SK-N-SH (cell line): ENCODE measurements at regions of chr17 and their contacts with region 1.

Region 1: GRCh38 chr17:48259694-48260291 is 152.2 kb downstream of the SNX11 start:
- DNase-seq: no peak
- H3K4me3 ChIP-seq: no peak overlapping the region; a peak in 1 of 4 replicates
- H3K27ac ChIP-seq: no peak overlapping the region
- H3K4me1 ChIP-seq: no peaks in the 10 kb centered on the region
- H3K27me3 ChIP-seq: peaks cover 66% of the 10 kb centered on the region
- CTCF ChIP-seq: peak; percentile 56
- EP300 ChIP-seq: no peak
- RAD21 ChIP-seq: peak; percentile 37

Region 2: GRCh38 chr17:48131216-48131824 is 128.5 kb before region 1 on chr17:
- CTCF ChIA-PET with region 1: no interaction called
- POLR2A ChIA-PET with region 1: no interaction called
- DNase-seq: peak; percentile 82
- H3K4me3 ChIP-seq: no peak overlapping the region; a peak in 1 of 4 replicates
- H3K27ac ChIP-seq: no peak overlapping the region
- H3K4me1 ChIP-seq: peaks cover 7 to 17% of the 10 kb centered on the region in 2 experiments; a peak in 2 of 4 replicates
- H3K27me3 ChIP-seq: peaks cover 8% of the 10 kb centered on the region; the same call in 1 of the 2 replicates
- CTCF ChIP-seq: peak; percentile 99
- EP300 ChIP-seq: no peak
- RAD21 ChIP-seq: peak; percentile 99

Region 3: DNA sequence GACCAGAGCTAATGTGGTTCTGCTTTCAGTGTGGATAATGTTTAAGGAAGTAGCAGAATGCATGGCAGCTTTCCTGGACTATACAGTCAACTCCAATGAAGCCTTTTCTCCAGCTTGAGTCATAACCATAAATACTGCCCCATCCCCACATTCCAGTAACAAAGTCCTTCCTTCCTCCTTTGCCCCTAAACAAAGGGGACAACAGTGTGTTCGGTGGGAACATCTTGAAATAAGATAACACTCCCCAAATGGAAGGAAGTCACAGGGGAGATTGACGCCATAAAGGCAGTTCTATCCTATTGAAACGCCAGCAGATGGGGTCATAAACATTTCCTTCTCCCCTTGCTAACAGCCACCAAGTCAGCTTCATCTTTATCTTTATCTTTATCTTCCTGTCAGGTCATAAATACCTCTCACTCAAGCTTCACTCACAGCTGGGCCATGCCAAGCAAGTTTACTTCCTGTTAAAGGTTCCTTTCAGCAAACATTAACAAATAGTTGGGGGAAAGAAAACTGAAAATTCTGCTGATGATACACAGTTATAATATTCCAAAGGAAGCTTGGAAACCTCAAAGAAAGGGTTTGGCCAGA is 15.6 kb before region 1 on chr17:
- CTCF ChIA-PET with region 1: interaction called, 31 read pairs
- POLR2A ChIA-PET with region 1: no interaction called
- DNase-seq: no peak
- H3K4me3 ChIP-seq: no peak overlapping the region
- H3K27ac ChIP-seq: no peak overlapping the region
- H3K4me1 ChIP-seq: peaks cover 6 to 25% of the 10 kb centered on the region in 2 experiments; a peak in 3 of 4 replicates
- H3K27me3 ChIP-seq: peaks cover 41% of the 10 kb centered on the region
- CTCF ChIP-seq: no peak
- EP300 ChIP-seq: no peak
- RAD21 ChIP-seq: no peak

Region 4: DNA sequence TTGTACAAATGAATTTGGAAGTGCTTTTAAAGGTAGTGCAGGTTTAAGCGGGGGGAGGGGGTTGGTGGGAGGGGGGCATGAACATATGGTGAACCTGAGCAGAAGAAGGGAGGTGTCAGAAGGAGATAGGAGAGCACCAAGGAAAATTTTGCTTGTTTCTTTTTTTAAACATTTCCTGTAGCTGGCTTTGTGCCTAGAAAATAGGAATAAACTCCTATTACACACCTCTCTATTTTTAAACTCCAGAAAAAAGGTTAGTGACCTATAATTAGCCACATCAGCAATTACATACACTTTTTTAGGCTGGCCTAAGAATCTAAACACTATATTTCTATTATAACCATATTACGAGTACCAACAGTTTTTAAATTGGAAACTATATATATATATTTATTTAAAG is 11.1 kb after region 1 on chr17:
- CTCF ChIA-PET with region 1: interaction called, 35 read pairs
- POLR2A ChIA-PET with region 1: no interaction called
- DNase-seq: no peak
- H3K4me3 ChIP-seq: no peak overlapping the region
- H3K27ac ChIP-seq: no peak overlapping the region
- H3K4me1 ChIP-seq: no peaks in the 10 kb centered on the region
- H3K27me3 ChIP-seq: peaks cover 63% of the 10 kb centered on the region
- CTCF ChIP-seq: no peak
- EP300 ChIP-seq: no peak
- RAD21 ChIP-seq: no peak

Region 5: DNA sequence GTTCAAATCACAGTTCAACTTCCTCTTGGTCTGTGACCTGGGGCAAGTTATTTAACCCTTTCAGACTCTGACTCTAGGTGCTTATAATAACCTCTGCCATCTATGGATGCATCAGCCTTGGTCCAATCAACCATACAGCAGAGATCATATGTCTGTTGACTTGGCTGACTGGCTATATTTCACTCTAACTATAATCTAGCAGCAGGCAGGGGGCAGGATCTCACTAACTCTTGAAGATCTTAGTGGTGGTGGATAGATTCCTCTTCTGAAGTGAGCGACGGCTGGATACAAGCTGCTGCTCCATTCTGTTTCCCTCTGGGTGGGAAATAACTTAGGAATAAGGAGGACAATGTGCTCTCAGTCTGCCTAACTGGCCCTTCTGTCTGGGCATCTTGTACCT is 23.6 kb after region 1 on chr17:
- CTCF ChIA-PET with region 1: interaction called, 12 read pairs
- POLR2A ChIA-PET with region 1: no interaction called
- DNase-seq: no peak
- H3K4me3 ChIP-seq: no peak overlapping the region
- H3K27ac ChIP-seq: no peak overlapping the region
- H3K4me1 ChIP-seq: no peaks in the 10 kb centered on the region
- H3K27me3 ChIP-seq: peaks cover 73% of the 10 kb centered on the region; the same call in 1 of the 2 replicates
- CTCF ChIP-seq: no peak
- EP300 ChIP-seq: no peak
- RAD21 ChIP-seq: no peak

Region 6: GRCh38 chr17:48295362-48296288 is 35.8 kb after region 1 on chr17:
- CTCF ChIA-PET with region 1: interaction called, 12 read pairs
- POLR2A ChIA-PET with region 1: no interaction called
- DNase-seq: no peak
- H3K4me3 ChIP-seq: no peak overlapping the region
- H3K27ac ChIP-seq: no peak overlapping the region
- H3K4me1 ChIP-seq: no peaks in the 10 kb centered on the region; a peak in 1 of 4 replicates
- H3K27me3 ChIP-seq: peaks cover 57% of the 10 kb centered on the region
- CTCF ChIP-seq: no peak
- EP300 ChIP-seq: no peak
- RAD21 ChIP-seq: no peak

Region 7: DNA sequence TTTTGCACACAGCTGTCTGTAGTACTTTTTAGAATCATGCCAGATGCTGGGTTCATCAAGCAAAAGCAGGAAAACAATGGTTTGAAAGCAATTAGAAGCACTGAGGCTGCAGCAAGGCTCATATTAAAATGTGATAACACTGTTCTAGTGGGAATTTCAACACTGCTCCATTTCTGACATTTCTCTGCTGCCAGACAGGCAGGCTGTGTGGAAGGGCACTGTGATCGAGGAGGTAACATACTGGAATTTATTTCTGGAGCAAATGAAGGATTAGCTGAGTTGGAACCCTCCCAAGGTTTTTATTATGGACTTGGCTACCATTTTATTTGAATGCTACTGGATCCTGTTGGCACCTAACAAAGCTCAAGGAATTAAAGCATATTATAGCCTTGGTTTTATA is 103.4 kb after region 1 on chr17:
- CTCF ChIA-PET with region 1: no interaction called
- POLR2A ChIA-PET with region 1: no interaction called
- DNase-seq: no peak
- H3K4me3 ChIP-seq: no peak overlapping the region
- H3K27ac ChIP-seq: no peak overlapping the region
- H3K4me1 ChIP-seq: no peaks in the 10 kb centered on the region
- H3K27me3 ChIP-seq: peaks cover 66% of the 10 kb centered on the region
- CTCF ChIP-seq: no peak
- EP300 ChIP-seq: no peak
- RAD21 ChIP-seq: no peak

Region 8: GRCh38 chr17:48374650-48375230 is 114.9 kb after region 1 on chr17:
- CTCF ChIA-PET with region 1: no interaction called
- POLR2A ChIA-PET with region 1: no interaction called
- DNase-seq: peak; percentile 24
- H3K4me3 ChIP-seq: peak overlapping the region in 1 of 2 experiments; percentile 23; a peak in 1 of 4 replicates
- H3K27ac ChIP-seq: no peak overlapping the region
- H3K4me1 ChIP-seq: no peaks in the 10 kb centered on the region
- H3K27me3 ChIP-seq: peaks cover 65% of the 10 kb centered on the region
- CTCF ChIP-seq: peak; percentile 50; the same call in 1 of the 2 replicates
- EP300 ChIP-seq: no peak
- RAD21 ChIP-seq: peak; percentile 46

Region 9: GRCh38 chr17:48453447-48453846 is 193.7 kb after region 1 on chr17:
- CTCF ChIA-PET with region 1: no interaction called
- POLR2A ChIA-PET with region 1: no interaction called
- DNase-seq: no peak
- H3K4me3 ChIP-seq: no peak overlapping the region
- H3K27ac ChIP-seq: no peak overlapping the region
- H3K4me1 ChIP-seq: no peaks in the 10 kb centered on the region; a peak in 1 of 4 replicates
- H3K27me3 ChIP-seq: peaks cover 70% of the 10 kb centered on the region
- CTCF ChIP-seq: no peak
- EP300 ChIP-seq: no peak
- RAD21 ChIP-seq: no peak